ENCODE measurements at regions of chr2 and their contacts with region 1.

Region 1: DNA sequence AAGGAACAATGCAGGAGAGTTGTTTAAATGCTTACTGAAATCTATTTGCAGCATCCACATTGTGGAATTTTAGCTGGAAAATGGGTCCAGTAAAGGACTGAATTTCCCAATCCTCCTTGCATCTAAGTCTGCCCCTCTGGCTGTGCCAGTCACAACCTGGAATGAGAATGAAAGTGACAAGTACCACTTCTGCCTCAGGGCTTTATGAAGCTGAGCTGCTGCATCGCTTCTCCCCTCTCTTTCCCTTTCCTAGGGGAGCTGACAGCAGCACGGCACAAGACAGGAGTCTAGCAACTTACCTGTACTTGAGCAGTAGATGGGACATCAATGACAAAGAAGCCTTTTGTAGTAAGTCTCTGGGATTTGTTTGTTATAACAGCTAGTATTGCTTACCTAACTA is 27.3 kb upstream of the THSD7B start:
- DNase-seq: no peak
- H3K4me3 ChIP-seq: no peak overlapping the region
- H3K27ac ChIP-seq: no peak overlapping the region
- H3K4me1 ChIP-seq: no peaks in the 10 kb centered on the region
- CTCF ChIP-seq: no peak

Region 2: GRCh38 chr2:136423516-136423996 is 314.5 kb before region 1 on chr2:
- CTCF ChIA-PET with region 1: no interaction called
- POLR2A ChIA-PET with region 1: no interaction called
- intact Hi-C with region 1: loop called (anchors 1 kb)
- DNase-seq: peak; percentile 94
- H3K4me3 ChIP-seq: peak overlapping the region; percentile 65
- H3K27ac ChIP-seq: no peak overlapping the region
- H3K4me1 ChIP-seq: peaks cover 43% of the 10 kb centered on the region
- CTCF ChIP-seq: peak; percentile 94